ENCODE measurements at regions of chr4 and their contacts with region 1.

Region 1: GRCh38 chr4:2745981-2746806 is 9.9 kb downstream of the TNIP2 start:
- DNase-seq: peak; percentile 98
- H3K4me3 Mint-ChIP-seq: peak overlapping the region; percentile 54
- H3K27ac Mint-ChIP-seq: peak overlapping the region; percentile 90
- H3K4me1 Mint-ChIP-seq: peaks cover 61% of the 10 kb centered on the region
- H3K27me3 Mint-ChIP-seq: no peaks in the 10 kb centered on the region

Region 2: GRCh38 chr4:2412885-2413716 is 333.1 kb before region 1 on chr4:
- CTCF ChIA-PET with region 1: no interaction called
- POLR2A ChIA-PET with region 1: interaction called, 5 read pairs
- intact Hi-C with region 1: loop called (anchors 2 kb)
- DNase-seq: peak; percentile 96
- H3K4me3 Mint-ChIP-seq: peak overlapping the region; percentile 66
- H3K27ac Mint-ChIP-seq: peak overlapping the region; percentile 97
- H3K4me1 Mint-ChIP-seq: peaks cover 63% of the 10 kb centered on the region
- H3K27me3 Mint-ChIP-seq: no peaks in the 10 kb centered on the region

Region 3: DNA sequence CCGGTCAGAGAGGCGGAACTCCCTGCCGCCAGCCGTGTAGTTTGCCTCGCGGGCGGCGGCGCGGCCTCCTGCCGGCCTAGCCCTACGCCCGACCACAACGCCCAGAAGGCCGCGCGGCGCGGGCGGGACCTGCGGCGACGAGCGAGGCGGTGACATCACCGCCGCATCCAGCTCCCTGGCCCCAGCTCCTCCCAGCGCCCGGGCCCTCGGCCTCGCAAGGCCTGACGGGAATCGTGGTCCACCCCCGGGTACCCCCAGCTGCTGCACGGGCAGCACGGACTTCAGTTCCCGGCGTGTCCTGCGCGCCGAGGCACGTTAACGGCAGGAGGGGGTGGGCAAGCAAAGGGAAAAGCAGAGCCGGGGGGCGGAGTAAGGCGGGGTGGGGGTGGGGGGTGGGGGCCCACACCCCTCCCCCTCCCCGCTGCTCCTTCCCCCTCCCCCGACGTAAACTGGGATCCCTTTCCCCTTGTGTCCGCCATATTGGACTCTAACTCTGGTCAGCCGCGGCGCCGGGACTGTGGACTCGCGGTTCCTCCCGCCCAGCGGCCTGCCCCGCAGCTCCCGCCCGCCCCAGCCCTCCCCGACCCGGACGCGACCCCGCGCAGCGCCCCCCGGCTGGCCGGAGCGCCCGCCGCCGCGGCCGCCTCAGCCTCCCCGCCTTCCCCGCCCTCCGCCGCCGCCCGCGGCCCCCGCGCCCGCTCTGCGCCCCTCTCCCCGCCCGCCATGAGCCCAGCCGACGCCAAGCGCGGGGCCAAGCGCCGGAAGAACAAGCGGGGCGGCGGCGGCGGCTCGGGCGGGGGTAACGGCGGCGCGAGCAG is 209.8 kb before region 1 on chr4 and contains the start of gene FAM193A:
- CTCF ChIA-PET with region 1: no interaction called
- POLR2A ChIA-PET with region 1: interaction called, 3 read pairs
- intact Hi-C with region 1: loop called (anchors 1 kb)
- DNase-seq: peak; percentile 100
- H3K4me3 Mint-ChIP-seq: peak within 1 kb of the TSS; percentile 87
- H3K27ac Mint-ChIP-seq: peak within 1 kb of the TSS; percentile 86
- H3K4me1 Mint-ChIP-seq: peaks cover 20% of the 10 kb centered on the region
- H3K27me3 Mint-ChIP-seq: no peaks in the 10 kb centered on the region
- total RNA-seq, gene FAM193A: 21.7 to 22.6 TPM

Region 4: GRCh38 chr4:2714061-2714770 is 32.0 kb before region 1 on chr4:
- CTCF ChIA-PET with region 1: interaction called, 6 read pairs
- POLR2A ChIA-PET with region 1: interaction called, 5 read pairs
- intact Hi-C with region 1: loop called (anchors 1 kb)
- DNase-seq: peak; percentile 69
- H3K4me3 Mint-ChIP-seq: peak overlapping the region; percentile 27
- H3K27ac Mint-ChIP-seq: peak overlapping the region; percentile 82
- H3K4me1 Mint-ChIP-seq: peaks cover 26% of the 10 kb centered on the region
- H3K27me3 Mint-ChIP-seq: no peaks in the 10 kb centered on the region

Region 5: DNA sequence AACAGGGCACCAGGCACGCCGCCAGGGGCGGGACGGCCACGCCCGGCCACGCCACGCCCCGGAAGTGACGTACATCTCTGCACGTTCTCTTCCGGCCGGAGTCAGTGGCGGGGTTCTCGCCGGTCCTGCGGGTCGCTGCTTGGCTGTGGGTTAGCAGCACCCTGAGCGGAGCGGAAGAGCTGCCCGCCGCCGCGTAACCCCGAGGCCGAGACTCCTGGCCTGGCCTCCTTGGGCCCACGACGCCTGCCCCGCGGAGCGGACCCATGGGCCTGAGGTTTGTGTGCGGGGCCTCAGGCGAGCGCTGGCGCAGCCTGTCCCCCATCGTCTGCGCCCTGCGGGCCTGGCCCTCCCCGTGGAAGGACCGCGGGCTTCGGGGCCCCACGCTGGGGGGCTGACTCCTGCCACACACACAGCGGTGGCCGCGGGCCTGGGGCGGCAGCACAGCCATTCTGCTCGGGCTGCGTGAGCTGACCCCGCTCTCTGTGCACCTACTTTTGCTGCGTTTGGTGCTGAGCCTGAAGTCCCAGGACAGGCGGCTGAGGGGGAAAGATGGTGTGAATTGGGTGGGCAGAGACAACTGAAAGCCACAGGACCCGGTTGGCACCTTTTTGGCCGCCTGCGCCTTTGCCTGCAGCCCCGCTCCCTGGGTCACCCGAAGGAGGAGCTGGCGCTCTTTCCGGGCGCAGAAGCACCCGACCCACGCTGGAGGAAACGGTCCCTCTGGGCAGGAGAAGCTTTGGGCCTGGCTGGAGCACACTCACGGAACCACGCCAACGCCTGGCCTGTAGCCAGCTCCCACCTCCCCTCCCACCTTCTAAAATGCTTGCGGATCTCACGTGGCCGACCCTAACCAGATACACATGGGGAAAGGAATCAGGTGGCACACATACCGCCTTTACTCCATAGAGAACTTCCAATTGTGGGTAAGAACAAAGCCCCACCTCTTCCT is 188.9 kb after region 1 on chr4:
- CTCF ChIA-PET with region 1: interaction called, 3 read pairs
- POLR2A ChIA-PET with region 1: interaction called, 44 read pairs
- intact Hi-C with region 1: loop called (anchors 1 kb)
- DNase-seq: peak; percentile 97
- H3K4me3 Mint-ChIP-seq: peak overlapping the region; percentile 93
- H3K27ac Mint-ChIP-seq: peak overlapping the region; percentile 95
- H3K4me1 Mint-ChIP-seq: peaks cover 53% of the 10 kb centered on the region
- H3K27me3 Mint-ChIP-seq: no peaks in the 10 kb centered on the region